AG04450 (cell line): ENCODE measurements at regions of chr6 and their contacts with region 1.

Region 1: GRCh38 chr6:132530293-132530974 is 7.6 kb upstream of the TAAR9 start:
- DNase-seq: peak; percentile 29
- H3K4me3 ChIP-seq: no peak overlapping the region
- H3K27ac ChIP-seq: no peak overlapping the region
- H3K27me3 ChIP-seq: peaks cover 7% of the 10 kb centered on the region
- CTCF ChIP-seq: peak; percentile 76

Region 2: DNA sequence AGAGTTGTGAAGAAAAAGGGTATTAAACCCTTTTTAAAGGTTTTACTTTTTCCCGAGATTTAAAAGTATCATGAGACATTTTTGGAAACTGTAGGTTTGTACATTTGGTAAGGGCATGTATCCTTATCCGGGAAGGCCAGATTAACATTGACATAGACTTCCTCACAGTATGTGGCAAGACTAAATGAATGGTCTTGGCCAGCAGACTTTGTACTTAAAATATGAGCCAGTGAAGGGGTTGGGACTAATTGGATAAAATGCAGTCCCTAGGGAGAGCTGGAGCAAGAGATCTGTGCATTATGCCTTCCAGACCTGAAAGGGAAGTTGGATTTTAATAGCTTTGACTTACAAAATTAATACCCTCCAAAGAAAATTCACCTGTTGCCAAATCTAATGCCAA is 518.9 kb before region 1 on chr6:
- CTCF ChIA-PET with region 1: no interaction called
- POLR2A ChIA-PET with region 1: no interaction called
- DNase-seq: no peak
- H3K4me3 ChIP-seq: no peak overlapping the region
- H3K27ac ChIP-seq: no peak overlapping the region
- H3K27me3 ChIP-seq: no peaks in the 10 kb centered on the region
- CTCF ChIP-seq: no peak

Region 3: DNA sequence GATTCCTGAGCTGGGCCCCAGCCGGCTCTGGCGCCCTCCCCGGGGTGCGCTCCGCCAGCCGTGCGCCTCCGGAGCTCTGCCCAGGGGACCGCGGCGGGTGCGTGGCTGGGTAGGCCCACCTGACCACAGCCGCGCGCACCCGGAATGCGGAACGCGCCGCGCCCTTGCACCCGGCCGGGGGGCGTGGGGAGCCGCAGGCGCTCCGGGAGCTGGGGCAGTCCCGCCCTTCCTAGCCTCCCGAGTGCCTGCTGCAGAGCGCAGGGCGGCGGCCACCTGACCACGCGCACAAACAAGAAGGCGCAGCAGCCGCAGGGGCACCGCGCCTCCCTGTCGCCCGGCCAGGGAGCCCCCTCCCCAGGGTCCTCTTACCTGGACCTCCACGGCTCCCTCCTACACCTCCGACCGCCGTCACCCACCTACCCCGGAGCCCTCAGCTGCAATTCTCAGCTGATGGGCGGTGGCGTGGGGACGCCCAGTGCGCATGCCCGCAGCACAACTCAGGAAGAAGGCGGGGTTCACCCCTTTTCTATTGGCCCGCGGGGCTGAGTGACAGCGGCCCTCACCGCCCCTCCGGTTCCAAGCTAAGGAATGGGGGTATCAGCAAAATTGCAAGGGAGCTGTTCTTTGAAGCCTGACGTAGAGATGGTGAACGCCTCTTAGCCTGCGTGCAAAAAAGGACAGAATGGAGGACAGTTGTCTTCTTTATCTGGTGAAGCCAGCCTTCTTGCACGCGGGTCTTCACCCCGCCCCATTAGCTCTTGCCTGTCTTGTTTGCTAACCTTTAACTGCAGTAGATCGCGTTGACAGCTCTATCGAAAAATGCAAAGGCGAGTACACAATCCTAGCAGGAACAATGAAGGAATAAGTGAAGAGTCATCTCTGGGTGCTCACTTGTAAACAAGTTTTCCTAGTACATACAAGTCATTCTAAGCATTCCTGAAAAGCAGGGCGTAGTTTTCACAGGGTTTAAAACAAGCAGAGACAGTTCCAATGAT is 17.5 kb before region 1 on chr6 and contains the start of gene STX7:
- CTCF ChIA-PET with region 1: interaction called, 11 read pairs
- POLR2A ChIA-PET with region 1: no interaction called
- DNase-seq: peak; percentile 52
- H3K4me3 ChIP-seq: peak within 1 kb of the TSS; percentile 80
- H3K27ac ChIP-seq: peak within 1 kb of the TSS; percentile 25
- H3K27me3 ChIP-seq: peaks cover 3% of the 10 kb centered on the region
- CTCF ChIP-seq: no peak
- polyA plus RNA-seq, gene STX7: 37.0 and 42.7 TPM in 2 replicates

Region 4: GRCh38 chr6:132544826-132545225 is 14.4 kb after region 1 on chr6:
- CTCF ChIA-PET with region 1: interaction called, 25 read pairs
- POLR2A ChIA-PET with region 1: no interaction called
- DNase-seq: no peak
- H3K4me3 ChIP-seq: no peak overlapping the region
- H3K27ac ChIP-seq: no peak overlapping the region
- H3K27me3 ChIP-seq: peaks cover 29% of the 10 kb centered on the region
- CTCF ChIP-seq: no peak